ENCODE measurements at regions of chr5 and their contacts with region 1.

Region 1: DNA sequence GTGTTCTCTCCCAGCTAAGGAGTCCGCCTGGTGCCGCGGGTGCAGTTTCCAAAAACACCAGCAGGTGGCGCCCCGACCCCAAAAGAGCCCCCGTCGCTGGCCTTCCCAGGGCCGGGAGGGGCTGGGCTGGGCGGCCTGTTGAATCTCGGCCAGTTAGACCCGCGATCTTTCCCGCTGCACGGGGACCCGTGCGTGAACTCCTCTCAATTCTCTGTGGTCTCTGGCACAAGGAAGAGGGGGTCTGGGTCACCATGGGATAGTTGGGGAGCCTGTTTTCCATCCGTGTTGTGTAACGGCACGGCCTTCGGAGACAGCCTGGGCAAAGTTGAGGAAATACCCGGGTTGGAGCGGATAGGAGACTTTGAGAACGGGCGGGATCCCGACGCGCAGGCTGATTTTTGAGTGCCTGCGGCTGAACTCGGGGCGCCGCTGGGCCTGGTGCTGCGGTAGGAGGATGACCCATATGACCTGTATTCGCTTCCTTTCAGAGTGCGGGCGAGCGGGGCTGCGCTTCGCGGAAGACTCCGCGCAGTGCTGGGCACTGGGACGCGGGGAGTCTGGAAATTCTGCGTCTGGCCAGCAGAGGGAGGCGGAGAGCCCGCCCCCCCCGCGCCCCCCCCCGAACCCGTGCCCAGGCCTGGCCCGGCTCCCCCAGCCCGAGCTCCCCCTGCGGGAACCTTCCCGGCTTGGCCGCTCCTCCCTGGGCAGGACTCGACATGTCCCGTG is 7.9 kb upstream of the PSD2 start:
- DNase-seq: no peak
- H3K4me3 ChIP-seq: peak overlapping the region; percentile 73
- CTCF ChIP-seq: peak; percentile 95

Region 2: GRCh38 chr5:139711067-139711905 is 76.4 kb before region 1 on chr5:
- CTCF ChIA-PET with region 1: no interaction called
- POLR2A ChIA-PET with region 1: no interaction called
- DNase-seq: no peak
- H3K4me3 ChIP-seq: peak overlapping the region; percentile 59
- CTCF ChIP-seq: peak; percentile 16

Region 3: DNA sequence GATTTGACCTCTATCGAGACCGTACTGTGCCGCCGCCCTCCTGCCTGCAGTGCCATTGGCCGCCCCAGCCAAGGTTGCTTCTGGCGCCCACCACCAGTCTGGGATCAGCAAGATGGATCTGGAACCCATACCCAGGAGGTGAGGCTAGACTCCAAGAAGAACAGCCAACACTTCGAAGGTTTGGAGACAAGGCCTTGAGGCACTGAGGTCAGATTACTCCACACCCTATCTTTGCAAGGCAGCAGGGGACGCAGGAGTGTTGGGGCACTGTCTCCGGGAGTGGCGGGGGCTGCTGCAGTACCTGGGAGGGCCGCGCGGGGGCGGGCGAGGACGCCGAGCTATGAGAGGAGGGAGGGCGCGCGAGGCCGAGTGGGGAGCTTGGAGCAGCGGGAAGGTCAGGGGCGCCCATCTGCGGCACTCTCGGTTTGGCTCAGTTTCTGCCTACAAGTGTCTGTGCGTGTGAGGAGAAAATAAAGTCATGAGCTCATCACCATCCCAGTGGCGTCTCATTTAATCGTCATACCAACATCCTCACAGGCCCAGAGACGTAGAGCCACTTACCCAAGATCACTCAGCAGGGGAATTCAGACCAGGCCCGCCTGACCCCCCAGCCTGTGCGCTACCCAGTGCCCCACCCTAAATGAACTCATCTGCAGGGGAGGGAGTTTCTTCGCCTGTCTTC is 12.6 kb before region 1 on chr5:
- CTCF ChIA-PET with region 1: interaction called, 124 read pairs
- POLR2A ChIA-PET with region 1: interaction called, 3 read pairs
- DNase-seq: no peak
- H3K4me3 ChIP-seq: no peak overlapping the region
- CTCF ChIP-seq: peak; percentile 91

Region 4: GRCh38 chr5:139833525-139833924 is 45.8 kb after region 1 on chr5:
- CTCF ChIA-PET with region 1: interaction called, 14 read pairs
- POLR2A ChIA-PET with region 1: no interaction called
- DNase-seq: no peak
- H3K4me3 ChIP-seq: no peak overlapping the region
- CTCF ChIP-seq: no peak

Region 5: GRCh38 chr5:139844472-139845145 is 56.9 kb after region 1 on chr5:
- CTCF ChIA-PET with region 1: interaction called, 129 read pairs
- POLR2A ChIA-PET with region 1: no interaction called
- DNase-seq: peak; percentile 10
- H3K4me3 ChIP-seq: no peak overlapping the region
- CTCF ChIP-seq: peak; percentile 86

Region 6: GRCh38 chr5:139863855-139864558 is 76.3 kb after region 1 on chr5:
- CTCF ChIA-PET with region 1: interaction called, 144 read pairs
- POLR2A ChIA-PET with region 1: no interaction called
- DNase-seq: no peak
- H3K4me3 ChIP-seq: no peak overlapping the region
- CTCF ChIP-seq: peak; percentile 72

Region 7: GRCh38 chr5:139985733-139986132 is 198.0 kb after region 1 on chr5:
- CTCF ChIA-PET with region 1: interaction called, 10 read pairs
- POLR2A ChIA-PET with region 1: interaction called, 3 read pairs
- DNase-seq: peak; percentile 66
- H3K4me3 ChIP-seq: no peak overlapping the region
- CTCF ChIP-seq: no peak

Region 8: DNA sequence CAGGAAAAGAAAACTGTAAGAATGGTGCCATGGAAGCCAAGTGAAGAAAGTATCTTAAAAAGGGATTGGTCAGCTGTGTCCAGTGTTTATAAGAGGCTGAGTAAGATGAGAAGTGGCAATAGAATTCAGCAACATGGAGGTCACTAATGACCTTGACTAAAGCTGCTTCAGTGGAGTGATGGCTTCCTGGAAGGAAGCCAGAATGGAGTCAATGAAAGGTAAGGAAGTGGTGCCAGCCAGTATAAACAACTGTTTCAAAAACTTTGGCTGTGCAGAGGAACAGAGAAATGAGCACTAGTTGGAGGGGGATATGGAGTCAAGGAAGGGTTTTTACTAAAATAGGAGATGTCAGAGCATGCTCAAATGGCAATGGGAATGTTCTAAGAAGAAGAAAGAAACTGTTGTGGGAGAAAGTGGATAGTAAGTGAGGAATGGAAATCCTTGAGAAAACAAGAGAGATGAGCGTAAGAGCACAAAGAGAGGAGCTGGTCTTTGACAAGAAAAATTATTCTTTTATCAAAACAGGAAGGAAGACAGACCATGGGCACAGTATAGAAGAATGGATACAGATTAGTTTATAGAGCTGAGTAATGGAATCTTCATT is 266.5 kb after region 1 on chr5:
- CTCF ChIA-PET with region 1: no interaction called
- POLR2A ChIA-PET with region 1: no interaction called
- DNase-seq: no peak
- H3K4me3 ChIP-seq: no peak overlapping the region
- CTCF ChIP-seq: no peak

Measured in AG04449 (cell line).